Activated T-helper 2 cell treated with anti-CD3 and anti-CD28 coated beads, Interferon-gamma antibody, Interleukin-2, Interleukin-4, amounts not matched to agents 10 μg/mL and 5 μg/mL and 100 μg/mL, durations not matched to agents 14 hours and 24 hours and 36 hours (primary cell): ENCODE measurements at regions of chr17 and their contacts with region 1.

Region 1: DNA sequence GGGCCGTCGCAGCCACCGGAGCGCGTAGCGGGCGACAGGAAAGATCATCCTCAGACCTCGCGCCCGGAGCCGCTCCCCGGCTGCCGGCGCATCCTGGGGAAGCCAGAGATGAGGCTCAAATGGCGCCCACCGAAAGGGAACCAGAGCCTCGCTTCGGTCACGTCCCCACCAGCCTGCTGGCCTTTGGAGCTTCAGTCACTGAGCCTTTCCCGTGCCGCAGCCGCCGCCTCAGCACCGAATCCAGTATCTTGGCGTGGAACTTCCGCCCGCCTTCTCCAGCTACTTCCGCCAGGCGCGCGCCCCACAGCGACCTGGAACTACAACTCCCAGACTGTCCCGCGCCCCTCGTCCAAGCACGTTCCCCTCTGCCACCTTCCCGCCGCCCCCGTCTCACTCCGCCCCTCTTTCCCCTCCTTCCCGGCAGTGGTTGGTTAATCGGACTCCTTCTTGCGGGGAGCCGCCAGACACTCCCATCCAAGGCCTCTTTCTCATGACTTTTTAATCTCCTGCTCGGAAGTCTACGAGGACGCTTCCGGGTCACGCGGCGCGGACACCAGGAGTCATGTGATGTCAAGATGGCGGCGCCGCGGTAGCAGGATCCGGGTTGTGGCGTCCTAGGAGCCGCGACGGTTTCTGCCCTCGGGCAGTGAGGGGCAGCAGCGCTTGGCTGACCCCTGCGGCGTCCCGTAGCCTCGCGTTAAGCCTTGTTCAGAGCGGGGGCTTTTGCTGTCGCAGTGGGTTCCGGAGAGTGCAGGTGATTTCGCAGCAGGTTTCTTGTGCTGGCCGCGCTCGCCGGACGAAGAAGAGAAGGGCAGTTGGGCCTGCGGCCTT is at the starts of genes SMCR8 and TOP3A:
- DNase-seq: peak; percentile 98
- H3K4me3 Mint-ChIP-seq: peak within 1 kb of the TSS; percentile 94
- H3K27ac Mint-ChIP-seq: peak within 1 kb of the TSS; percentile 100
- H3K4me1 Mint-ChIP-seq: peaks cover 61% of the 10 kb centered on the region
- H3K27me3 Mint-ChIP-seq: no peaks in the 10 kb centered on the region
- total RNA-seq, gene SMCR8: 16.5 and 16.8 TPM in 2 replicates
- total RNA-seq, gene TOP3A: 70.7 and 75.0 TPM in 2 replicates

Region 2: GRCh38 chr17:18241229-18241871 is 73.6 kb before region 1 on chr17:
- intact Hi-C with region 1: no loop called
- DNase-seq: no peak
- H3K4me3 Mint-ChIP-seq: no peak overlapping the region
- H3K27ac Mint-ChIP-seq: no peak overlapping the region
- H3K4me1 Mint-ChIP-seq: no peaks in the 10 kb centered on the region
- H3K27me3 Mint-ChIP-seq: no peaks in the 10 kb centered on the region

Region 3: GRCh38 chr17:18260332-18261144 is 54.4 kb before region 1 on chr17 and contains the start of gene MIEF2:
- intact Hi-C with region 1: loop called (anchors 2 kb)
- DNase-seq: peak; percentile 89
- H3K4me3 Mint-ChIP-seq: peak within 1 kb of the TSS; percentile 82
- H3K27ac Mint-ChIP-seq: peak within 1 kb of the TSS; percentile 82
- H3K4me1 Mint-ChIP-seq: peaks cover 25% of the 10 kb centered on the region
- H3K27me3 Mint-ChIP-seq: no peaks in the 10 kb centered on the region
- total RNA-seq, gene MIEF2: 6.8 and 7.9 TPM in 2 replicates

Region 4: DNA sequence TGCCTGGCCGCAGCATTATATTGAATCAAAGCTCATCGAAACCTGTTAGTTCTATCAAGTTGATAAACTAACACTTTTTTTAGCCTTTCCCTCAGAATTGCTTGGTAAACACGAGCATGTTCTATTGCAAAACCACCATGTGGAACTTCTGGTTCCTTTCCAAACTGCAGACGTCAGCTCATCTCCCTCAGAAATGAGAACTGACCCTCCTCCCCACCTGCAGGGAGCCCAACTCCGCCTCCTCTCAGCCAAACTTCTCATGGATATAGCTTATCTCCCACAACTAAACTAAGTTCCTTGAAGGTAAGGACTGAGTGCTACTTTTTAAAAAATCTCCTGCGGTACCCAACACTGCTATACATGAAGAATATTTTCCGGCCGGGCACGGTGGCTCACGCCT is 41.7 kb after region 1 on chr17:
- intact Hi-C with region 1: no loop called
- DNase-seq: no peak
- H3K4me3 Mint-ChIP-seq: no peak overlapping the region
- H3K27ac Mint-ChIP-seq: no peak overlapping the region
- H3K4me1 Mint-ChIP-seq: peaks cover 3% of the 10 kb centered on the region
- H3K27me3 Mint-ChIP-seq: no peaks in the 10 kb centered on the region